ENCODE measurements at regions of chr10 and their contacts with region 1.

Region 1: DNA sequence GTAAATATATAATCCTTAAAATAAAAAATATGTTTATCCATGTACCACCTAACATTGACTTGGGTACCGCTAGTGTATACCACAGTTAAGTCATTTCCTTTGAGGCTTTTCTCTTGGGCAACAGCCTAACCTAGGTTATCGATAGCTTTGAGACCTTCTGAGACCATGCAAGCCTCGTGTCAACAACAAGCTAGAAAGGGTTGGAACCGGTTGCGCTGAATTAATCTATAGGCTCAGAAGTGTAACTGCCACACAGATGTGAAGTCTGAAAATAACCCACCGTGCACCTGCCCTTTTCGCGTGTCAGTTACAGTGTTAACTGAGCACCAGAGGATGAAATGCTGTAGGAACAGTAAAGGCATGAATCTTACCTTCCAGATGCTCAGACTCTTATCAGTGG is 59.8 kb downstream of the ARID5B start:
- DNase-seq: peak; percentile 99
- H3K4me3 ChIP-seq: no peak overlapping the region
- H3K27ac ChIP-seq: peak overlapping the region; percentile 97
- H3K4me1 ChIP-seq: peaks cover 98% of the 10 kb centered on the region
- CTCF ChIP-seq: no peak

Region 2: GRCh38 chr10:61164458-61165160 is 796.7 kb before region 1 on chr10:
- CTCF ChIA-PET with region 1: no interaction called
- POLR2A ChIA-PET with region 1: no interaction called
- intact Hi-C with region 1: no loop called
- DNase-seq: no peak
- H3K4me3 ChIP-seq: no peak overlapping the region
- H3K27ac ChIP-seq: no peak overlapping the region
- H3K4me1 ChIP-seq: no peaks in the 10 kb centered on the region
- CTCF ChIP-seq: no peak

Region 3: DNA sequence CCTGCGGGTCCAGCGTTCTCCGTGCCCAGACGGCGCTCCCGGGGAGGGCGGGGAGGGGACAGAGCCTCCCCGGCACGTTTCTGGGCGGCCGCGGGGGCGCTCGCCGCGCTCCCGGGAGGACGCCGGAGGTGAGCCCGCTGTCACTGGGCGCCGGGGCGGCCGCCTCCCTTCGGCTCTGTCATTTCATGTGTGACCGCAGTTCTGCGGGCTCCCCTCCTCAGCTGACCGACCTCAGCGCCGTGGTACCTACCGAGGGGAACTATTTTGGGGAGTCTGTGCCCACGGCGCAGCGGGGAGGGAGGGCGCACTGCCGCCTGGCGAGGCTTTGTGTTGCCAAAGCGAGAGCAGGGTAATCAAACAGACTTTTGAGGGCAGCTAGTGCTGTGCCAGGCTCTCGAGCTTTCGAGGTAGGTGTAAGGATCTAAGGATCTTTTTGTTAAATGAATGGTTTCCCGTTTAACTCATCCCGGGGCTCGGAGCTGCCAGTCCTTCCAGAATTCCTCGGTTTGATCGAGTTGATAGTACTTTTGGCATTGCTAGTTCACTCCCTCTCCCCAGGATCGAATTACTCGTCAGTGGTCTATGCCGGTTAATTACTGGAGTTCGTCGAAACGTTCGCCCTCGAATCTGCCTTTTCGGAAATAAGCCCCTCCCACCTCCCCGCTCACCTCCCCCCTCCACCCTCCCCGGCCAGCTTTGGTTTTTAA is 57.9 kb before region 1 on chr10:
- CTCF ChIA-PET with region 1: interaction called, 4 read pairs
- POLR2A ChIA-PET with region 1: interaction called, 284 read pairs
- intact Hi-C with region 1: loop called (anchors 1 kb)
- DNase-seq: peak; percentile 77
- H3K4me3 ChIP-seq: peak overlapping the region; percentile 93
- H3K27ac ChIP-seq: peak overlapping the region; percentile 96
- H3K4me1 ChIP-seq: peaks cover 50% of the 10 kb centered on the region
- CTCF ChIP-seq: peak; percentile 59

Region 4: GRCh38 chr10:61974601-61975390 is 13.5 kb after region 1 on chr10:
- CTCF ChIA-PET with region 1: interaction called, 3 read pairs
- POLR2A ChIA-PET with region 1: interaction called, 73 read pairs
- intact Hi-C with region 1: no loop called
- DNase-seq: peak; percentile 77
- H3K4me3 ChIP-seq: peak overlapping the region; percentile 50
- H3K27ac ChIP-seq: peak overlapping the region; percentile 86
- H3K4me1 ChIP-seq: peaks cover 80% of the 10 kb centered on the region
- CTCF ChIP-seq: no peak

Region 5: GRCh38 chr10:62000037-62000603 is 38.8 kb after region 1 on chr10:
- CTCF ChIA-PET with region 1: interaction called, 3 read pairs
- POLR2A ChIA-PET with region 1: interaction called, 11 read pairs
- intact Hi-C with region 1: loop called (anchors 1 kb)
- DNase-seq: peak; percentile 85
- H3K4me3 ChIP-seq: peak overlapping the region; percentile 65
- H3K27ac ChIP-seq: peak overlapping the region; percentile 83
- H3K4me1 ChIP-seq: peaks cover 98% of the 10 kb centered on the region
- CTCF ChIP-seq: no peak

Region 6: DNA sequence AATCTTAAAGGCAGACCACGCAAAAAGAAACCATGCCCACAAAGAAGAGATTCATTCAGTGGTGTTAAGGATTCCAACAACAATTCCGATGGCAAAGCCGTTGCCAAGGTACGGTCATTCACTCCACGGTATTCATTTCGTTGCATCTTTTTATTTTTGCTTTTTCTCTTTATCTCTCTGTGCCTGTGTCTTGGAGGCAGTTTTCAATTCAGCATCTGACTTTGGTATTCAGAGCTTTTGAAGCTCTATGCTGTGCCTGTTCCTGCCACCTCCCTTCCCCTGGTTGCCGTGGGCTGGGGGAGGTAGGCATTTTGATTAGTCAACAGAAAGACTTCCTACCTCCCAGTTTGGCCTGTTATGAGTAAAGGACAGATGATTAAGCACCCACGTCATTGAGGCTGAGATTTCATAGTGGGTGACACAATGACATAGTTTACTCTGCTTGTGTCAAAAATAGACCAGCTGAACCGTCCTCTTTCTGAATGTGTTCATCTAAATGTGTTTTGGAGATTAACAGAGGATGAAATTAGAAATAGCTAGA is 89.7 kb after region 1 on chr10:
- CTCF ChIA-PET with region 1: interaction called, 3 read pairs
- POLR2A ChIA-PET with region 1: interaction called, 82 read pairs
- intact Hi-C with region 1: no loop called
- DNase-seq: no peak
- H3K4me3 ChIP-seq: peak overlapping the region; percentile 61
- H3K27ac ChIP-seq: no peak overlapping the region
- H3K4me1 ChIP-seq: peaks cover 70% of the 10 kb centered on the region
- CTCF ChIP-seq: no peak

Region 7: GRCh38 chr10:62528441-62528840 is 567.2 kb after region 1 on chr10:
- CTCF ChIA-PET with region 1: no interaction called
- POLR2A ChIA-PET with region 1: no interaction called
- intact Hi-C with region 1: loop called (anchors 10 kb)
- DNase-seq: peak; percentile 90
- H3K4me3 ChIP-seq: peak overlapping the region; percentile 51
- H3K27ac ChIP-seq: peak overlapping the region; percentile 96
- H3K4me1 ChIP-seq: peaks cover 56% of the 10 kb centered on the region
- CTCF ChIP-seq: no peak

Measured in OCI-LY7 (cell line).